ENCODE measurements at regions of chr2 and their contacts with region 1.

Region 1: DNA sequence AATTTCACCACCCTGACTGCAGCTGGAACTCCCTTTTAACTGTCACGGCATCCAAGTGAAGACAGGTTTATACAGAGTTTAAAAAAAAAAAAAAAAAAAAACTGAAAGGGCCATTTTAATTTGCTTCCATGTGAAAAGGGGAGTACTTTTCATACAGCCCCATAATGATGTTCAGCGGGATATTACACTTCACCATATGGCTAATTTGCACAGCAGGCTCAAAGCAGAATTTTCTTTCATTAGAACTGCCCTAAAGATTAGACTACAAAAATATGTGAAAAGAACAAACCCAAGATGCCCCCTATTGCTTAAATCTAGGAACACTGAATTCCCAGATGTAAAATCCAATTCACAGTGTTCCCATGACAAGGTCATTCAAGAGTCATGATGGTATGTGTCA is 301.8 kb downstream of the EXOC6B start:
- DNase-seq: no peak
- H3K4me3 ChIP-seq: no peak overlapping the region
- H3K27me3 ChIP-seq: no peaks in the 10 kb centered on the region
- CTCF ChIP-seq: no peak

Region 2: GRCh38 chr2:72041638-72042111 is 482.4 kb before region 1 on chr2:
- CTCF ChIA-PET with region 1: no interaction called
- POLR2A ChIA-PET with region 1: interaction called, 22 read pairs
- DNase-seq: no peak
- H3K4me3 ChIP-seq: no peak overlapping the region
- H3K27me3 ChIP-seq: peaks cover 6% of the 10 kb centered on the region; the same call in 1 of the 2 replicates
- CTCF ChIP-seq: no peak

Region 3: GRCh38 chr2:72457801-72458516 is 66.1 kb before region 1 on chr2:
- CTCF ChIA-PET with region 1: no interaction called
- POLR2A ChIA-PET with region 1: no interaction called
- DNase-seq: peak; percentile 46
- H3K4me3 ChIP-seq: peak overlapping the region; percentile 11; the same call in 1 of the 2 replicates
- H3K27me3 ChIP-seq: no peaks in the 10 kb centered on the region
- CTCF ChIP-seq: no peak

Region 4: DNA sequence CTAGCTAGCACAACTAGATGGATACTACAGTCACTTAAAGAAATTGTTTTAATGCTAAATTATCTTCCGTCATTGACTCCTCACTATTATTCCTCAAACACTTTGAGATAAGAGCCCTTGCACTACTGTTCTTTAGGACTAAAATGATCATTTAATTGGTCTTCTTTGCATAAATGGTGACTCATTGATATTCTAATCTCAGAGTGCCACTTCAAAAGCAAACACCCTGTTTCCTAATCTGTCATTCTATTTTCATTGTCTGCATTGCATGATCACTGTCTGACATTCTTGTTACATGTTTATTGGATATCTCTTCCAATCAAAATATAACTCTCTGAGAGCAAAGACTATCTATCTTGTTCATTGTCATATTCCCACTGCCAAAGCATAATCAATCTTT is 12.2 kb before region 1 on chr2:
- CTCF ChIA-PET with region 1: no interaction called
- POLR2A ChIA-PET with region 1: no interaction called
- DNase-seq: no peak
- H3K4me3 ChIP-seq: no peak overlapping the region
- H3K27me3 ChIP-seq: no peaks in the 10 kb centered on the region
- CTCF ChIP-seq: no peak

Region 5: DNA sequence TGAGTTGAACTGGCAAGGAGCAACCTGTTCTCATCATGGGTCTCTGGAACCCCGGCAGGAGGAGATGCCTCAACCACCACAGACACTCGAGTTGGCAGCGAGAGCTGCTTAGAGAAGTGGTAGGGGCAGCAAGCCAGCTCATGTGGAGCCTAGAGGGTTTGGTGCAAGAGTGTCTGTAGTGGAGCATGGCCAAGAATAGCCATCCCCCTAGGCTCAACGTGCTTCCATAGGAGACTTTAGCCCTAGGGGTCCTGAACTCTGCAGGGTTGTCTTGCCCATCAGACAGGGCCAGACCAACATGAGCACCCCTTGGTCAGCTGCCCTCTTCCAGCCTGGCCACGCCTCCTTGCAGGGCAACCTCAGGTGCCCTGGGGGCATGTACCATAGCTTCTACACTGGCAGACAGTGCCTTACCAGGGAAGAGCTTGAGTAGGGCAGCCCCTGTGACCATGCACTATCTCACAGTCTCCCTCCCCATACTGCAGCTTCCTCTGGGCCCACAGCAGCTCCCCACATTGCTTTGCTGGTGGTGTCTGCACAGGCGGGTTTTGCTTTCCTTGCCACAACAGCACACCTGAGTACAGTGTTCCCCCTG is 114.6 kb after region 1 on chr2:
- CTCF ChIA-PET with region 1: no interaction called
- POLR2A ChIA-PET with region 1: no interaction called
- DNase-seq: no peak
- H3K4me3 ChIP-seq: no peak overlapping the region
- H3K27me3 ChIP-seq: no peaks in the 10 kb centered on the region
- CTCF ChIP-seq: no peak